Dendritic cell treated with granulocyte-macrophage colony-stimulating factor and Interleukin-4, amounts not matched to agents 40 ng/mL and 50 ng/mL, for 4 days (primary cell): ENCODE measurements at regions of chr9 and their contacts with region 1.

Region 1: DNA sequence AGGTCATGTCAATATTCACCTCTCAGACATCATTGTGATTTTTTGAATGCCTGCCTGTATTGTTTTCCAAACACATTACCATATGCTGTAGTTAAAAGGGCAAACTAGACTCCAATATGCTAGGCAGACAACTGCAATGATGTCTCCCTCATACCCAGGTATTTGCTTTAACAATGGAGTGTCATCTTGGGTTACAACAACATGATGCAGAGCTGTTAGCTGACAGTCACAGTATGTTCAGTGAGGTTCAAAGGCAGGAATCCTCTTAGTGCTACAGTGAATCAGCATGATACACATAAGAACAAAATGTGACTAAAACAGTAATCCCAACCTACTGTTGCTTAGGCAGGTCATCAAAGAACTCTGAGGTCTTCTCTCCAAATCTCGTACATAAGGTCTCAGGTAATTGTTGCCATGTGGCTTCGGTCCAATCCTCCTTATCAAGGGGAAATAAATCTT is 24.0 kb downstream of the OR1J1 start:
- H3K4me3 Mint-ChIP-seq: no peak overlapping the region
- H3K27ac Mint-ChIP-seq: no peak overlapping the region
- H3K4me1 Mint-ChIP-seq: no peaks in the 10 kb centered on the region
- H3K27me3 Mint-ChIP-seq: peaks cover 12% of the 10 kb centered on the region

Region 2: DNA sequence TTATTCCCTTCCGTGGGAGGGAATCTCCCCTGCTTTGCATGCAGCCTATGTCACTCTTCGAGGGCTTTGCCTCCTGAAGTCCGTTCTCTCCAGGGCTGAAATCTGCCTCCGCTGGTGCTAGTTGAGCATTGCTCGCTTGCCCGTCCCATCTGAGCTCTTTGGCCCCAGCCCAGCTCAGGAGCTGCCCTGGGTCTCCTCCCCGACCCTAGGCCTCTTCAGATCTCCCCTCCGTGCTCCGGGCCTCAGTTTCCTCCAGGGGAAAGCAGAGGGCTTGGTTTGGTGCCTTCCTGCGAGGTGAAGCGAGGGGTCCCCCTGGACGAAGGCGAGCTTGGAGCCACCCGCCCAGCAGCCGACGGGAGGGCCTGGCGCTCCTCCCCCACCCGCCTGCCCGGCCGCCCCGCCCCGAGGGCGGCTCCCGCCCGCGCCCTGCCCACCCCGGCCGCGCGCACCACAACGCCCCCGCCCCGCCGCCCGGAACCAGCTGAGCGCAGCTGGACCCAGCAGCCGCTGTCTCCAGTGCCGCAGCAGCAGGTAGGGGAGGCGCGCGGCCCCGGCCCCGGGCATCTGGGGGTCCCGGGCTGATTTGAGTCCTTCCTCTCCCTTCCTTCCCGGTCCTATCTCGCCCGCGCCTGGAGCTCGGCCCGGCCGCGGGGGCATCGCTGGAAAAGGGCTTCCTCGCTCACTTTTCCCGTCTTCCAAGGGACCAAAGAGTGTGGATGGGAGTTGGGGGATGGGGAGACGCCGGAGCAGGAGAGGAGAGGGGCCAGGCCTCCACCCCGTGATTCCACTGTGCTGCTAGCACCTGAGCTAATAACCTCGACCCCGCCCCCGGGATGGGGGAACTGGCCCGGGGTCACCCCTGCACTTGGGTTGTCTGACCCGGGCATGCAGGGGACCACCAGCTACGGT is 1185.8 kb before region 1 on chr9 and contains the start of gene GSN:
- intact Hi-C with region 1: no loop called
- H3K4me3 Mint-ChIP-seq: peak within 1 kb of the TSS; percentile 97
- H3K27ac Mint-ChIP-seq: peak within 1 kb of the TSS; percentile 94
- H3K4me1 Mint-ChIP-seq: peaks cover 78% of the 10 kb centered on the region
- H3K27me3 Mint-ChIP-seq: no peaks in the 10 kb centered on the region

Region 3: GRCh38 chr9:122099271-122099869 is 354.3 kb before region 1 on chr9:
- intact Hi-C with region 1: loop called (anchors 2 kb)
- H3K4me3 Mint-ChIP-seq: peak overlapping the region; percentile 37
- H3K27ac Mint-ChIP-seq: no peak overlapping the region
- H3K4me1 Mint-ChIP-seq: peaks cover 13% of the 10 kb centered on the region
- H3K27me3 Mint-ChIP-seq: peaks cover 20% of the 10 kb centered on the region